Lower lobe of right lung (tissue), 2 donors: ENCODE measurements at regions of chr6 and their contacts with region 1.

Region 1: DNA sequence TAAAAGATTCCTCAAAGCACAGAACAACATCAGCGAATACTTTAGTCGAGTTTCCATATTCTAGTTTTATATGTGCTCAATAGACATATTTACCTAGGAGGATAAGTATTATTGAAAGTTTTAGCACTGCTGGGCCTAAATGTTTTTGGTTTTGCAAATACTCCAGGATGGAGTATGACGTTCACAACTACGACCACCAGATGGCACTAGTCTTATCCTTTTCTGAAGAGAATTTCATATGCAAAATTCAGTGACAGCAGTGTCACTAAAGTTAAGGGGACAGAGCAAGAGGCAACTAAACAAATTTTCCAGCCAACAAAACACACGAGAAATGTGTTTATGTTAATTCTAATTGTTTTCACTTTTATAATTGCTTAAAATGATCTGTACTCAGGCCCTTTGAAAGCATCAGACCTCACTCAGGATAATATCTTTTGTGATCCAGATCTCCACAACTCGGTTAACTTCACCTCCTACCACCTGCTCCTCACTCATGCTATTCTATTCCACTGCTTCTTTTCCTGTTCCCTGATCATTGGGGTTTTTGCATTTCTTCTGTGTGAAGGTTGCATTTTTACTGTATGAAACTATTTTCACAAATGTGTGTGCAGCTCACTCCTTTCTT is 220.8 kb downstream of the TRDN start:
- DNase-seq: no peak
- ATAC-seq: peak; percentile 51 to 56
- H3K4me3 ChIP-seq: no peak overlapping the region
- H3K27ac ChIP-seq: no peak overlapping the region
- H3K4me1 ChIP-seq: no peaks in the 10 kb centered on the region
- H3K27me3 ChIP-seq: no peaks in the 10 kb centered on the region
- CTCF ChIP-seq: peak; percentile 63

Region 2: GRCh38 chr6:123171341-123172115 is 244.4 kb before region 1 on chr6:
- intact Hi-C with region 1: no loop called
- DNase-seq: no peak
- ATAC-seq: no peak
- H3K4me3 ChIP-seq: no peak overlapping the region
- H3K27ac ChIP-seq: no peak overlapping the region
- H3K4me1 ChIP-seq: no peaks in the 10 kb centered on the region
- H3K27me3 ChIP-seq: no peaks in the 10 kb centered on the region
- CTCF ChIP-seq: no peak

Region 3: DNA sequence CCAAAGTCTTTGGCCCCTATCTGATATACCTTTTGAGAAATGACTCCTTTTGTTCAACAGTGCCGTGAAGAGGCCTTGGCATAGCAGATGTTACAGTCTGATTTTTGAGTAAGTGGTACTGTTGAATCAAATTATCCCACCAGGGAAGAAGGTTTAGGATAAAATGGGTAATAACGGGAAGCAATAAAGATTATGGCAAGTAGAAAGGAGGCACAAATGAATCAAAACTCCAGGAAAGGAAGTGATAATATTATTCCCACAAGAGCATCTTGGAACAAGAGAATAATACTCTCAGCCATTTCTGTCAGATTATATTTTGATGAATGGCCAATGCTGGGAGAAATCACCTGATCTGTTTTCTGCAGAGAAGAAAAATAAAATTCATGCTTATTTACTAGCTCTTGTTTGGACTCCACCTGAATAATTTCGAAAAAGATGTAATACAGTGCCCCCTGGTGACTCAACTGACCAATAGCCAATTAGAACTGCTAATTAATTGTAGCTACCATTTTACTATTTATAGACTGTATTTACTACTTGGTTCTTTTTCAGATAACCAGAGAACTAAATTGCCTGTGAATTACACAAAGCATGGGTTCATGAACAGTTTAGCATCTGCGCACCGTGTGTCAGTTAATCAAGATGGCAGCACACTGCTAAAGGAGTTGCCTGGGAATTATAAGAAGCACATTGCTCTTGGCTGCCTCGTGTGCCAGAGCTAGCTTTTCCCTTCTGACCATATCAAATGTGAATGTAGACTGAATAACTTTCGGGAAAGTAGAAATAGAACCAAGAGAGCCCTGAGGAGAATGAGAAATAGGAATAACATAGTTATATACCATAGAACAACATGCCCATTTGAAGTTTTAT is 299.3 kb after region 1 on chr6:
- intact Hi-C with region 1: loop called (anchors 10 kb)
- DNase-seq: no peak
- ATAC-seq: peak in 1 of 2 donors; percentile 46
- H3K4me3 ChIP-seq: no peak overlapping the region
- H3K27ac ChIP-seq: no peak overlapping the region
- H3K4me1 ChIP-seq: no peaks in the 10 kb centered on the region
- H3K27me3 ChIP-seq: no peaks in the 10 kb centered on the region
- CTCF ChIP-seq: peak; percentile 49